ENCODE measurements at regions of chr1 and their contacts with region 1.

Region 1: GRCh38 chr1:7862211-7863060 is 9.6 kb upstream of the UTS2 start:
- DNase-seq: no peak
- ATAC-seq: no peak
- H3K4me3 ChIP-seq: no peak overlapping the region
- H3K27ac ChIP-seq: no peak overlapping the region
- H3K4me1 ChIP-seq: no peaks in the 10 kb centered on the region
- H3K27me3 ChIP-seq: no peaks in the 10 kb centered on the region
- CTCF ChIP-seq: no peak

Region 2: DNA sequence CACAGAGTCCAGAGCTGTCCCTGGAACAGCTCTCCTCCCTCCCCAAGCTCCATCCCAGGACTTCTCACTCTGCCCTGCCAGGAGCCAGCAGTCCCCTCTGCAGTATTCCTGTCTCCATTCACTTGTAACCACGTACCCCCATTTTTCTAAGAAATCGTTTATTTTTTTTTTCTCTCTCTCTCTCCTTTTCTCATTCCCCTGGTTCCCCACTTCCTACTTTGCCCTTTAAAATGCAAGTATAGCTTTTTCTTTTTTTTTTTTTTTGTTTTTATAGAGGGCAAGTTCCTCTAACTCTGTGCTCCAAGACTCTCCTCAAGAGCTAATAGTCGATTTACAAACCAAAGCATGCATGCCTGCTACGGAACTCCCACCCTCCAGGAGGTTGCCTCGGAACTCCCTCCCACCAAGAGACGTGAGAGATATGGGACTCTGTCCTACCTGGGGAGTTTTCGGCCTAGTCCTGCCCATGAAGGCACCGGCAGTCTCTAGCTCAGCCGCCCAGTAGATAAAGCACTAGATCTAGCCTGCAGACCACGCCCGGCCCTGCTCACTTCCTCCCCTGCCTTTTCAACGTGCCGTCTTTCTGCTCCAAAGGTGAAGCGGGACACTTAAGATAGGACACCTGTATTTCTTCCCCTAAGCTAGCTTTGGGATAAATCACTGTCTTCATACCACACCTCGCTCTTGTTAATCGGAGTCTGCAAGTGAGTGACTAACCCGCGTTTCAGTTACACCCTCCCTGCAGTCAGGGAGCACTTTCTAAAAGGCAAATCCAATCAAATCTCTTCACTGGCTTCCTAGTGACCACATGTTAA is 50.5 kb after region 1 on chr1:
- CTCF ChIA-PET with region 1: no interaction called
- POLR2A ChIA-PET with region 1: interaction called, 10 read pairs
- in situ Hi-C with region 1: no loop called
- intact Hi-C with region 1: no loop called
- DNase-seq: no peak
- ATAC-seq: peak; percentile 70; the same call in 1 of the 2 replicates
- H3K4me3 ChIP-seq: peak overlapping the region in 1 of 2 experiments; percentile 29; a peak in 3 of 4 replicates
- H3K27ac ChIP-seq: no peak overlapping the region
- H3K4me1 ChIP-seq: peaks cover 6% of the 10 kb centered on the region; the same call in 1 of the 2 replicates
- H3K27me3 ChIP-seq: no peaks in the 10 kb centered on the region
- CTCF ChIP-seq: no peak